PC-3 (cell line): ENCODE measurements at regions of chr5 and their contacts with region 1.

Region 1: GRCh38 chr5:128736553-128736952 is 198.5 kb upstream of the FBN2 start:
- DNase-seq: peak; percentile 74
- ATAC-seq: peak; percentile 91
- H3K4me3 ChIP-seq: 0 out of 2 replicates have a peak overlapping the region, but pooled peaks have one; percentile 9
- H3K27ac ChIP-seq: peak overlapping the region; percentile 89
- H3K4me1 ChIP-seq: peaks cover 18% of the 10 kb centered on the region
- H3K27me3 ChIP-seq: no peaks in the 10 kb centered on the region
- CTCF ChIP-seq: no peak

Region 2: DNA sequence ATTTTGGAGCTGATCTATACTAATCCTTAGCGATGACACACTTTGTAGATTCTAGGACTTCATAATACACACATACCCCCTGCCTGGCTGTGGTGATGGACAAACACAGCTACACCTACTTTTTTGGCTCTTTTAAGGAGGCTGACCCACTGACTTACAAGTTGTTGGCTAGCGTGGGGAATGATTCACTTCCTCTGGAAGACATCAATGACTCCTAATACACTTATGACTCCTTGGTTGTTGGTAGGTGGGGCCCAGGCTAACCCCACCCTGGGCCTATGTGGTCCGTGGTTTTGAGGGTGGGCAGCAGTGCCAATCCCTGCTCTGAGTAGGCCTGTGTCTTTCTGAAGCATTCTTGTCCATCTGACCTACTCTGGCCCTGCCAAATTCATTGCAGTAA is 508.5 kb before region 1 on chr5:
- CTCF ChIA-PET with region 1: no interaction called
- POLR2A ChIA-PET with region 1: no interaction called
- intact Hi-C with region 1: loop called (anchors 5 kb)
- DNase-seq: peak; percentile 97
- ATAC-seq: peak; percentile 95
- H3K4me3 ChIP-seq: peak overlapping the region; percentile 5; the same call in 1 of the 2 replicates
- H3K27ac ChIP-seq: peak overlapping the region; percentile 89
- H3K4me1 ChIP-seq: peaks cover 22% of the 10 kb centered on the region
- H3K27me3 ChIP-seq: no peaks in the 10 kb centered on the region
- CTCF ChIP-seq: no peak

Region 3: DNA sequence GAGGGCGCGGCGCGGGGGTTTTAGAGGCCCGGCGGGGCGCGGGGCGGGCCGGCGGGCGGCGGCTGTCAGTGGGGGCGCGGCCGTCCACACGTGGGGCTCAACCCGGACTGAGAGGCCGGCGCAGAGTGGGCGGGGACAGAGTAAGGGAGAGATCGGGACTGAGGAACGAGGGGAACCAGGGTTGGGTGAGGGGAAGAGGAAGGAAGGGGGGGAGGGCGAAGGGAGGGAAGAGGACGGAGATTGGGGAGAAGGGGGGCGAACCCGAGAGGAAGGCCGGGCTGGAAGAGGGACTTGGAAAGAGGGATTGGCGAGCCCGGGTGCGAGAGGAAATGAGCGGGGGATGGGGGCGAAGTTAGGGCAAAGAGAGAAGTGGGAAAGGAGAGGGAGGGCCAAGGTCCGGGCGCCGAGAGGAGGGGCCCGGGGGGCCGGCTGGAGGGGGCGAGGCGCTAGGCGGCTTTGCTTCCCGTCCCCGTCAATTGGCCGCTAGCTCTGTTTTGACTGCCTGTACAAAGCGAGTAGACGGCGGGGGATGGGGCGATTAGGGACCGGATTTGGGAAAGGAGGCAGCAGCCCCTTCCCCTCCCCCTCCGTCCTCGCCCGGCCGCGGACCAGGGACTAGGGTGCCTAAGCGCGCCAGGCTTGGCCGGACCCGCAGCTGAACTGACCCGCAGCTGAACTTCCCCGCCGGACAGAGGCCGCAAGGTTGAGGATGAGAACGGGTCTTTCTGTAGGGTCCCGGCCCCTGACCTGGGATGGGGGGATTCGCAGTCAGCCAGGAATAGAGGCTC is 198.1 kb before region 1 on chr5:
- CTCF ChIA-PET with region 1: no interaction called
- POLR2A ChIA-PET with region 1: no interaction called
- intact Hi-C with region 1: loop called (anchors 5 kb)
- DNase-seq: peak; percentile 77
- ATAC-seq: peak; percentile 90
- H3K4me3 ChIP-seq: peak overlapping the region; percentile 92
- H3K27ac ChIP-seq: no peak overlapping the region
- H3K4me1 ChIP-seq: peaks cover 22% of the 10 kb centered on the region
- H3K27me3 ChIP-seq: no peaks in the 10 kb centered on the region
- CTCF ChIP-seq: no peak

Region 4: DNA sequence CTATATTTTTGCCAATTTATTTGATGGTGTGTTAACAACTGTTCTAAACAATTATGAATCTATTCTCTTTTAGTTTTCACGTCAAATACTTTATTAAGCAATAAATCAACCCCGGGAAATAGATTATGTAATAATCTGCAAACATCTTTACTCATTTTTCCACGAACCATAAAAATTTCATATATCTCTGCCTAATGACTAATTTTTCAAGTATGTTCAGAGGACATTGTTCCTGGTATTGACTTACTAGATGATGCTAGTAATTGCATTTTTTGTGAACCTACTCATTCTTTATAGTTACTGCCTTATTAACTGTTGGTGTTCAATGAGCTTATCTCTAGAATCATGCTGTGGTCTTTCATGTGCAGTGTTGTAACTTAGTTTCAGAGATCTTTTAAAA is 157.5 kb before region 1 on chr5:
- CTCF ChIA-PET with region 1: no interaction called
- POLR2A ChIA-PET with region 1: interaction called, 3 read pairs
- intact Hi-C with region 1: loop called (anchors 1 kb)
- DNase-seq: peak; percentile 92
- ATAC-seq: peak; percentile 90
- H3K4me3 ChIP-seq: peak overlapping the region; percentile 43; the same call in 1 of the 2 replicates
- H3K27ac ChIP-seq: peak overlapping the region; percentile 97
- H3K4me1 ChIP-seq: peaks cover 38% of the 10 kb centered on the region
- H3K27me3 ChIP-seq: no peaks in the 10 kb centered on the region
- CTCF ChIP-seq: no peak

Region 5: GRCh38 chr5:128667152-128667551 is 69.4 kb before region 1 on chr5:
- CTCF ChIA-PET with region 1: no interaction called
- POLR2A ChIA-PET with region 1: no interaction called
- intact Hi-C with region 1: loop called (anchors 2 kb)
- DNase-seq: peak; percentile 25
- ATAC-seq: peak; percentile 52
- H3K4me3 ChIP-seq: no peak overlapping the region
- H3K27ac ChIP-seq: no peak overlapping the region
- H3K4me1 ChIP-seq: peaks cover 4% of the 10 kb centered on the region; the same call in 1 of the 2 replicates
- H3K27me3 ChIP-seq: no peaks in the 10 kb centered on the region
- CTCF ChIP-seq: peak; percentile 50; the same call in 1 of the 2 replicates

Region 6: DNA sequence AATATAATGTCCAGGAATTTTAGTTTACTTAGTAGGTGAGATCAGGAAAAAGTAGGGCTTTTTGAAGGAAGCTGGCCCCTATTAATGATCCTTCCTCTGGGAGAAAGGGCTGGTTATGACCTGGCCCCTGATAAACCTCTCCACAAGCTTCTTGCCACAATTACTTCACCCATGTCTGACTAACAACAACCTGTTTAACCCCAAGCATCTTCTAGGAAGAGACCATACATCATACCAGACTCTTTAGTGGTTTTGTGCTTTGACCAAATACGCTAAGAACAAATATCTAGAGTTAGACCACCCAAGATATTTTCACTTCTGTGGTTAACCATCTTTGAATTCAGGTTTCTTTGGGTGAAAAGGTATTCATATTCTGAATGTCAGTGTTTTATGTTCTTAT is 54.8 kb after region 1 on chr5:
- CTCF ChIA-PET with region 1: no interaction called
- POLR2A ChIA-PET with region 1: interaction called, 12 read pairs
- intact Hi-C with region 1: no loop called
- DNase-seq: no peak
- ATAC-seq: no peak
- H3K4me3 ChIP-seq: no peak overlapping the region
- H3K27ac ChIP-seq: no peak overlapping the region
- H3K4me1 ChIP-seq: no peaks in the 10 kb centered on the region
- H3K27me3 ChIP-seq: 0 out of 2 replicates have a peak, but pooled peaks cover 6% of the 10 kb centered on the region
- CTCF ChIP-seq: no peak